ENCODE measurements at regions of chr3 and their contacts with region 1.

Region 1: GRCh38 chr3:177197041-177197727 is at the start of gene TBL1XR1:
- DNase-seq: peak; percentile 94
- H3K4me3 Mint-ChIP-seq: peak within 1 kb of the TSS; percentile 70
- H3K27ac Mint-ChIP-seq: peak within 1 kb of the TSS; percentile 71
- H3K4me1 Mint-ChIP-seq: peaks cover 32% of the 10 kb centered on the region
- H3K27me3 Mint-ChIP-seq: no peaks in the 10 kb centered on the region
- CTCF ChIP-seq: no peak
- total RNA-seq, gene TBL1XR1: 199 and 206 TPM in 2 replicates

Region 2: GRCh38 chr3:176692966-176693785 is 504.0 kb before region 1 on chr3:
- CTCF ChIA-PET with region 1: no interaction called
- intact Hi-C with region 1: no loop called
- DNase-seq: no peak
- H3K4me3 Mint-ChIP-seq: no peak overlapping the region
- H3K27ac Mint-ChIP-seq: no peak overlapping the region
- H3K4me1 Mint-ChIP-seq: peaks cover 9% of the 10 kb centered on the region
- H3K27me3 Mint-ChIP-seq: no peaks in the 10 kb centered on the region
- CTCF ChIP-seq: no peak

Region 3: DNA sequence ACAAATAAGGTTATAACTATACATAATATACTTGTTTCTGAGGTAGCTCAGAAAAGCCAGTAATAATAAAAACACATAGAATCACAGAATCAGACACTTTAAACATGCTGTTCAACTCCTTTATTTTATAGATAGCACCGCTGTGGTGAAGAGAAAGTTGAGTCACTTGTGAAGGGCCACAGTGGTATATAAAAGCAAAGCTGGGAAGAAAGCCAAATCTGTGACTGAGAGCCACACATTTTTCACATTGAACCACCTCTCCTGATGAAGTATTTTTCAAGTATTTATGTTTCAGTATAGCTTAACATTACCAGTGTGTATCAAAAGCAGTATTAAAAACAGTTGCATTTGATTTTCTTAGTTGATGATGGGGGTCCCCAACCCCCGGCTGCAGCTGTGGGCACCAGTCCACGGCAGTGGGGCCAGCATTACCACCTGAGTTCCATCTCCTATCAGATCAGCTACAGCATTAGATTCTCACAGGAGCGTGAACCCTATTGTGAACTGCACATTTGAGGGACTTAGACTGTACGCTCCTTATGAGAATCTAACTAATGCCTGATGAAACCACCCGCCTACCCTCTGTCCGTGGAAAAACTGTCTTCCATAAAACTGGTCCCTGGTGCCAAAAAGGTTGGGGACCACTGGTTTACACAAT is 46.1 kb before region 1 on chr3:
- CTCF ChIA-PET with region 1: no interaction called
- intact Hi-C with region 1: loop called (anchors 2 kb)
- DNase-seq: peak; percentile 30
- H3K4me3 Mint-ChIP-seq: peak overlapping the region; percentile 55
- H3K27ac Mint-ChIP-seq: peak overlapping the region; percentile 68
- H3K4me1 Mint-ChIP-seq: peaks cover 58% of the 10 kb centered on the region
- H3K27me3 Mint-ChIP-seq: no peaks in the 10 kb centered on the region
- CTCF ChIP-seq: no peak

Region 4: DNA sequence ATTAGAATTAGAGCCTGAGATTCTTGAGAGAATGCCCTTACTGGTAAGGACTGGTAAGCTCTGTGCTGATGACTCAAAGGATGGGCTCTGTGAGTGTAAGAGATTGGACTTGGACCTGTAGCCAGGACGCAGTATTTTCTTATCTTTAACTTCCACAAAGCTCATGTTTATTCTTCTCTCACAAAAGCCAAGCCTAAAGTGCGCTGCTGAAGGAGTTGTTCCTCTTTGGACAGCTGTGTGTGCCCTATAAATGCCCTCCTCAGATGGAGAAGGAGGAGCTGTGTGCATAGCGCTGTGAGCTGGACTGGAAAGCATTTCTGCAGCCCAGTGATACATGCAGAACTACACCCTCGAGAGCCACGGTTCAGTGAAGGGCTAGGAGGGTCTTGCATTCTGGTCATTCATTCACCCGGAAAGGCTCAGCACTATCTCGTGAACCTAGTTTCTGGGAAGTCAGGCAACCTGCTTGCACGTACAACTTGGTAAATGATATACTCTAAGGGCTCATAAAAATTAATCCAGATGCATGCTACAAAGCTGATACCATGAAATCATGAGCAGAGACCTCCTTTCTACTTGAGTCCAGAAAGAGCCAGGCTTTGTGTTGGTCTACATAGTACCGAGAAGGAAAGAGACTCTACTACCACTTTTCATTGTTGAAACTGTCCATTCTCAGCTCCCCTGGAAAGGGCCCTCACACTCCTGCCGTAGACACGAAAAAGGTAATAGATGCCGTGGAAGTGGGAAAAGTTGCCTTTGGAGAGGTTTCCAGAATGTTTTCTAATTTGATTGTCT is 103.1 kb after region 1 on chr3:
- CTCF ChIA-PET with region 1: interaction called, 4 read pairs
- intact Hi-C with region 1: loop called (anchors 2 kb)
- DNase-seq: peak; percentile 72
- H3K4me3 Mint-ChIP-seq: peak overlapping the region; percentile 50
- H3K27ac Mint-ChIP-seq: peak overlapping the region; percentile 86
- H3K4me1 Mint-ChIP-seq: peaks cover 39% of the 10 kb centered on the region
- H3K27me3 Mint-ChIP-seq: no peaks in the 10 kb centered on the region
- CTCF ChIP-seq: no peak

Region 5: GRCh38 chr3:177452474-177453450 is 255.6 kb after region 1 on chr3:
- CTCF ChIA-PET with region 1: no interaction called
- intact Hi-C with region 1: no loop called
- DNase-seq: no peak
- H3K4me3 Mint-ChIP-seq: no peak overlapping the region
- H3K27ac Mint-ChIP-seq: no peak overlapping the region
- H3K4me1 Mint-ChIP-seq: peaks cover 23% of the 10 kb centered on the region
- H3K27me3 Mint-ChIP-seq: no peaks in the 10 kb centered on the region
- CTCF ChIP-seq: no peak

Region 6: GRCh38 chr3:177478170-177478860 is 281.1 kb after region 1 on chr3:
- CTCF ChIA-PET with region 1: no interaction called
- intact Hi-C with region 1: loop called (anchors 1 kb)
- DNase-seq: peak; percentile 77
- H3K4me3 Mint-ChIP-seq: peak overlapping the region; percentile 16
- H3K27ac Mint-ChIP-seq: peak overlapping the region; percentile 4
- H3K4me1 Mint-ChIP-seq: peaks cover 39% of the 10 kb centered on the region
- H3K27me3 Mint-ChIP-seq: no peaks in the 10 kb centered on the region
- CTCF ChIP-seq: no peak

Region 7: DNA sequence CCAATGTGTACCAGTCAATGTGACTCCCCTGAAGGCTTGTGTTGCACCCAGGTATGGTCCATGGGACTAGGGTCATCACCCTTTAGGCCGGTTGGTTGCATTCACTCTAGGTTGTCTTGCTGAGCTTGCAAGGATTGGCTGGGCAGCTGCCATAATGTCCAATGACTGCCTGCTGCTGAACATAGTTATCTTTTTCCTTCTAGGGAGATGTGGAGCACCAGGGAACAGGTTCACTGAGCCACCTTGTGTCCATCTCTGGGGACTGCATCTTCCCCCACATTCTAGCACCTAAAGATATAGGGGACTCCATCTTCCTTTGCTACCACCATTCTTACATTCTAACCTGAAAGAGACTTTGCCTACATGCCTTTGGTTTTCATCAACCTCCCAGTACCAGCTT is 580.5 kb after region 1 on chr3:
- CTCF ChIA-PET with region 1: no interaction called
- intact Hi-C with region 1: loop called (anchors 10 kb)
- DNase-seq: peak; percentile 75
- H3K4me3 Mint-ChIP-seq: no peak overlapping the region
- H3K27ac Mint-ChIP-seq: no peak overlapping the region
- H3K4me1 Mint-ChIP-seq: peaks cover 12% of the 10 kb centered on the region
- H3K27me3 Mint-ChIP-seq: no peaks in the 10 kb centered on the region
- CTCF ChIP-seq: peak; percentile 95

Region 8: GRCh38 chr3:178325330-178325729 is 1128.1 kb after region 1 on chr3:
- CTCF ChIA-PET with region 1: no interaction called
- intact Hi-C with region 1: loop called (anchors 10 kb)
- DNase-seq: no peak
- H3K4me3 Mint-ChIP-seq: no peak overlapping the region
- H3K27ac Mint-ChIP-seq: no peak overlapping the region
- H3K4me1 Mint-ChIP-seq: no peaks in the 10 kb centered on the region
- H3K27me3 Mint-ChIP-seq: no peaks in the 10 kb centered on the region
- CTCF ChIP-seq: no peak

Measured in Calu3 (cell line).